ENCODE measurements at regions of chr16 and their contacts with region 1.

Region 1: GRCh38 chr16:48862087-48862532 is 252.1 kb upstream of the N4BP1 start:
- DNase-seq: peak; percentile 7
- ATAC-seq: peak; percentile 67
- H3K4me3 ChIP-seq: no peak overlapping the region
- H3K27ac ChIP-seq: no peak overlapping the region
- H3K4me1 ChIP-seq: peaks cover 0 to 4% of the 10 kb centered on the region in 2 experiments; a peak in 1 of 4 replicates
- H3K27me3 ChIP-seq: peaks cover 24% of the 10 kb centered on the region
- CTCF ChIP-seq: peak; percentile 28 to 56 (median 47); a peak in 4 of 6 replicates
- POLR2A ChIP-seq: no peak
- RAD21 ChIP-seq: peak; percentile 56

Region 2: DNA sequence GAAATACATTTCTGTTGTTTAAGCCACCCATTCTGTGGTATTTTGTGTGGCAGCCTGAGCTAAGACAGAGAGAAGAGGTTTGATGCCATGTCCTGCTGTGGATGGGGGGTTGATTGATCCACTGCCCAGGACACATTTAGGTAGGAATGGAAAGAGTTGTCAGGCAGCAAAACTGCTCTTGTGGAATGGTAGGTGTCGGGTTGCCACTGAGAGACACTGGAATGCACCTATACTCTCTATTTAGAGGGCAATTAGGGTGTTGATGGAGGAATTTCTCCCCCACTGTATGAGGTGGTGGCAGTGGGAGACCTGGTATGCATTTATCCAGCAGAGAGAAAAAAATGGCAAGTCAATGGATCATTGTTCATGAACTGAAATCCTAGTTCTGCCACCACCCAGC is 388.6 kb after region 1 on chr16:
- CTCF ChIA-PET with region 1: no interaction called
- POLR2A ChIA-PET with region 1: no interaction called
- RAD21 ChIA-PET with region 1: no interaction called
- intact Hi-C with region 1: loop called (anchors 10 kb)
- DNase-seq: no peak
- ATAC-seq: no peak
- H3K4me3 ChIP-seq: no peak overlapping the region
- H3K27ac ChIP-seq: no peak overlapping the region
- H3K4me1 ChIP-seq: no peaks in the 10 kb centered on the region
- H3K27me3 ChIP-seq: peaks cover 48% of the 10 kb centered on the region
- CTCF ChIP-seq: no peak
- POLR2A ChIP-seq: no peak
- RAD21 ChIP-seq: no peak